WTC11 (cell line): ENCODE measurements at regions of chr12 and their contacts with region 1.

Region 1: DNA sequence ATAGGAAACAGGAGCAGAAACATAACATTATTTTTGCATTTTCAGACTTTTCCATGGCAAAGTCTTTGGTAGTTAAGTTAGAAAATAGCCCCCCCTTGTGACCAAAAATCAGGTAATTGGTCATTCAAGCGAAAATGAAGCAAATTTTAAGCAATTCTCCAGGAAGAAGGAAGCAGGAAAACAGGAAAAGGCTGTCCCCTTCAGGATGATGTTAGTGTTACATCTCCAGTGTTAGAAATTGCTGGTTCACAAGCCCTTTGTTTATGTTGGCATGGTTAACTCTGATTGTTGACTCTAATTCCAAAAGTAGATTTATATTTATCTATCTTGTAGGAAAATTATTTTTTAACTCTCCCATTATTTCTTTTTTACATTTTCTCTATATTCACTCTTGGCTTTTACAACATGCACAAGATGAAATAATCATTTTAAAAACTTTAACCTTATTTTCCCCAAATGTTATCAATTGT is 18.8 kb upstream of the GAS2L3 start:
- DNase-seq: no peak
- ATAC-seq: peak; percentile 89
- H3K4me3 Mint-ChIP-seq: no peak overlapping the region
- H3K27ac Mint-ChIP-seq: no peak overlapping the region
- H3K4me1 Mint-ChIP-seq: peaks cover 5% of the 10 kb centered on the region; the same call in 1 of the 2 replicates
- H3K27me3 Mint-ChIP-seq: no peaks in the 10 kb centered on the region
- CTCF ChIP-seq: peak; percentile 84

Region 2: GRCh38 chr12:100348657-100349454 is 205.8 kb before region 1 on chr12:
- CTCF ChIA-PET with region 1: interaction called, 17 read pairs
- POLR2A ChIA-PET with region 1: no interaction called
- DNase-seq: no peak
- ATAC-seq: peak; percentile 52
- H3K4me3 Mint-ChIP-seq: no peak overlapping the region
- H3K27ac Mint-ChIP-seq: no peak overlapping the region
- H3K4me1 Mint-ChIP-seq: peaks cover 5% of the 10 kb centered on the region; the same call in 1 of the 2 replicates
- H3K27me3 Mint-ChIP-seq: no peaks in the 10 kb centered on the region
- CTCF ChIP-seq: peak; percentile 24; the same call in 1 of the 2 replicates

Region 3: DNA sequence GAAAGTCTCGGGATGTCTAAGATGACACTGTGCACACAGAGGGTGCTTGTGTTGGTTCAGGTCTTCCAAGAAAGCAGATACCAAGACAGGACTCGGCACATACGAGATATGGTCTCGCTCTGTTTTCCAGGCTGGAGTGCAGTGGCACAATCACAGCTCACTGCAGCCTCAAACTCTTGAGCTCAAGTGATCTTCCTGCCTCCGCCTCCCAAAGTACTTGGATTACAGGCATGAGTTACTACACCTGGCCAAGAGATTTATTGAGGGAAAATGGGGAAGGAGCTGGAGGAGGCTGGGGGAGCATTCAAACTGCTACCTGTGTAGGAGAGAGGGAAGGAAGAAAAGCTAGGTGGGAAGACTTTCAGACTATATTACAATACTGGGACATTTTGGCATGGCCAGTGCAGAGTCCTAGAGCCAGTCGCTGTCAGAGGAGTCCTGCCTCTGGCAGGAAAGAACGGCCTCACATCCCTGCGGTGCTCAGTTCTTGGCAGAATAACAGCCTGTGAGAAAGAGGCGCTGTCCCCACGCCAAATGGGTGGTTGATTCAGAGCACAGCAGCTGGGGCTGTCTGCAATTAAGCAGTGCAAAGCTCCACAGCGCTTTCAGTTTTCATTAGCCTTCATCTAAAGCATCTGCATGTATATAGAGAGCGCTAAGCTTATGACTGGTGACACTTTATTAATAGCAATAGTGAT is 179.5 kb before region 1 on chr12:
- CTCF ChIA-PET with region 1: interaction called, 12 read pairs
- POLR2A ChIA-PET with region 1: interaction called, 5 read pairs
- DNase-seq: no peak
- ATAC-seq: peak; percentile 52
- H3K4me3 Mint-ChIP-seq: no peak overlapping the region
- H3K27ac Mint-ChIP-seq: no peak overlapping the region
- H3K4me1 Mint-ChIP-seq: peaks cover 47% of the 10 kb centered on the region
- H3K27me3 Mint-ChIP-seq: peaks cover 58% of the 10 kb centered on the region
- CTCF ChIP-seq: no peak